ENCODE measurements at regions of chr5 and their contacts with region 1.

Region 1: GRCh38 chr5:55994574-55995333 is at the start of gene IL6ST:
- DNase-seq: peak; percentile 99
- total RNA-seq, gene IL6ST: 131 TPM

Region 2: GRCh38 chr5:55777332-55777731 is 217.4 kb before region 1 on chr5:
- intact Hi-C with region 1: no loop called
- DNase-seq: no peak

Region 3: GRCh38 chr5:56050551-56051255 is 55.9 kb after region 1 on chr5:
- intact Hi-C with region 1: loop called (anchors 5 kb)
- DNase-seq: no peak

Region 4: GRCh38 chr5:56070851-56071465 is 76.2 kb after region 1 on chr5:
- intact Hi-C with region 1: loop called (anchors 5 kb)
- DNase-seq: no peak

Region 5: GRCh38 chr5:56085193-56085592 is 90.4 kb after region 1 on chr5:
- intact Hi-C with region 1: no loop called
- DNase-seq: no peak

Region 6: GRCh38 chr5:56123531-56124243 is 128.9 kb after region 1 on chr5:
- intact Hi-C with region 1: loop called (anchors 5 kb)
- DNase-seq: no peak

Region 7: DNA sequence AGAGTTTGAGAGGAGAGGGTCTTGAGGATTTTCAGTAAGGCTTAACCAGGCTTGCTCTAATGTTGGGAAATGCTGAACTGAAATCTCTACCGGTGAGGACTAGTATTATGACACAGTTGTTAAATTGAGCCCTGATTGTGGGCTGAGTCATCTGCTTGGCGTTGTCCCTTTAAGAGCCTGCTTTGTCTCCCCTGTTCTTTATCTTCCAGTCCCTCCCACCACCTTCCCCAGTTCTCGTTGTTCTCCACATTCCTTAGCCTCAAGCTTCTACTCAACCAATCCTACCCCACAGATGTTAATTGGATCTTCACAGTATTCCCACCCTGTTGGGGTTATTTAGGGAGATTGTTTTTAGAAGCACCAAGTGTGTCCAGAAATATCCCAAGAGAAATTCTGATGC is 180.7 kb after region 1 on chr5:
- intact Hi-C with region 1: loop called (anchors 10 kb)
- DNase-seq: no peak

Region 8: GRCh38 chr5:57173185-57174127 is 1178.7 kb after region 1 on chr5 and contains the start of gene GPBP1:
- intact Hi-C with region 1: loop called (anchors 10 kb)
- DNase-seq: peak; percentile 98
- total RNA-seq, gene GPBP1: 49.0 TPM